PC-3 (cell line): ENCODE measurements at regions of chr11 and their contacts with region 1.

Region 1: GRCh38 chr11:77473801-77474683 is at the start of gene PAK1:
- DNase-seq: peak; percentile 69
- ATAC-seq: peak; percentile 73
- H3K4me3 ChIP-seq: peak within 1 kb of the TSS; percentile 69
- H3K27ac ChIP-seq: no peak within 1 kb of the TSS
- H3K4me1 ChIP-seq: peaks cover 20% of the 10 kb centered on the region
- H3K27me3 ChIP-seq: peaks cover 16% of the 10 kb centered on the region
- CTCF ChIP-seq: peak; percentile 29; the same call in 1 of the 2 replicates
- total RNA-seq, gene PAK1: 26.1 and 29.8 TPM in 2 replicates

Region 2: GRCh38 chr11:76721755-76722677 is 752.0 kb before region 1 on chr11:
- CTCF ChIA-PET with region 1: interaction called, 16 read pairs
- POLR2A ChIA-PET with region 1: no interaction called
- intact Hi-C with region 1: no loop called
- DNase-seq: peak; percentile 94
- ATAC-seq: peak; percentile 99
- H3K4me3 ChIP-seq: peak overlapping the region; percentile 50; the same call in 1 of the 2 replicates
- H3K27ac ChIP-seq: no peak overlapping the region
- H3K4me1 ChIP-seq: peaks cover 6% of the 10 kb centered on the region; the same call in 1 of the 2 replicates
- H3K27me3 ChIP-seq: peaks cover 22% of the 10 kb centered on the region; the same call in 1 of the 2 replicates
- CTCF ChIP-seq: peak; percentile 96

Region 3: DNA sequence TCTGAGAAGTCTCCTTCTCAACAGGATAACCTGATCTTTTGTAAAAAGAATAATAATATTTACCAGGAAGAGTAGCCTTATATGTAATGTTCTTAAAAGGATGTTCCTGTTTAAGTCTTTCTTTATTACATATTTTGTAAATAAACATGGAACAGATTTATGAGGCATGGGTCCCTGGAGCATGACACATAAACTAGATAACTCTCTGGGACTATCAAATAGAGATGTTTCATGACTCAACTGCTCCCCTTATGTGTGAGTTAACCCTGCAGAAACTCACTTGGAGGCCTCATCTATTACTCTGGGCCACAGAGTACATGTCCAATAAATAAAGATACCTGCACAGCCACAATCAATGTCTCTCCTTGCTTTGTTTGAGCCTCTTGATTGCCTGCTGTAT is 237.1 kb before region 1 on chr11:
- CTCF ChIA-PET with region 1: no interaction called
- POLR2A ChIA-PET with region 1: no interaction called
- intact Hi-C with region 1: no loop called
- DNase-seq: peak; percentile 35
- ATAC-seq: peak; percentile 65
- H3K4me3 ChIP-seq: no peak overlapping the region
- H3K27ac ChIP-seq: no peak overlapping the region
- H3K4me1 ChIP-seq: peaks cover 10% of the 10 kb centered on the region; the same call in 1 of the 2 replicates
- H3K27me3 ChIP-seq: no peaks in the 10 kb centered on the region
- CTCF ChIP-seq: no peak

Region 4: DNA sequence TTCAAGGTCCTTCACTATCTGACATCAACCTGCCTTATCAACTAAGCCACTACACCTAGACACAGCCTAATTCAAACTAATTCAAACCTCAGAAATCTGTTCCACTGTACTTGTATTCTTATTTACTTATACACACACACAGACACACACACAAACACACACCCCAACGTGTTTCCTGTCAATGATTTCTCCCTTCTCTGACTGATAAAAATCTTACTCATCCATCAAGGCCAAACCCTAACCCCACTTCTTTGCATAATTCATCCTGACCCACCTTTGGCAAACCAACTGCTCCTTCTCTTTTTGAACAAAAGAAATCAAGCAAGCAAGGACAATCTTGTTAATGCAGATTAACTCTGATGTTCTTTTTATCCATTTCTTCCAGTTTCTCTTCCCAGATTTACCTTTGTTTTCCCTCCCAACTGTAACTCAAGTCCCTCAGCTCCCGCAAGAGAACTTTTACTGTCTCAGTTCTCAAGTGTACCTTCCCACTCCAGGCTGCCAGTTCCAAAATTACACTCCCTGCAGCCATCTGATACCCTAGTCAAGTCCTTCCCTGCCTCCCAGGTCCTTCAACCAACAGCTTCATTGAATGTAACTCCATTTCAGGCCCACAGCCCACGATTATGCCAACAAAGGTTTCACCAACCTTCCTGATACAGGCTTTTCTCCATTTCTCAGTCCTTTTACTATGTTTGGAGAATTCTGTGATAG is 78.4 kb before region 1 on chr11:
- CTCF ChIA-PET with region 1: no interaction called
- POLR2A ChIA-PET with region 1: interaction called, 10 read pairs
- intact Hi-C with region 1: no loop called
- DNase-seq: peak; percentile 27
- ATAC-seq: peak; percentile 66
- H3K4me3 ChIP-seq: no peak overlapping the region
- H3K27ac ChIP-seq: no peak overlapping the region
- H3K4me1 ChIP-seq: peaks cover 12% of the 10 kb centered on the region
- H3K27me3 ChIP-seq: no peaks in the 10 kb centered on the region
- CTCF ChIP-seq: no peak

Region 5: GRCh38 chr11:77411717-77412441 is 62.2 kb before region 1 on chr11:
- CTCF ChIA-PET with region 1: no interaction called
- POLR2A ChIA-PET with region 1: interaction called, 4 read pairs
- intact Hi-C with region 1: loop called (anchors 5 kb)
- DNase-seq: peak; percentile 87
- ATAC-seq: peak; percentile 68
- H3K4me3 ChIP-seq: peak overlapping the region; percentile 63
- H3K27ac ChIP-seq: no peak overlapping the region
- H3K4me1 ChIP-seq: peaks cover 33% of the 10 kb centered on the region
- H3K27me3 ChIP-seq: no peaks in the 10 kb centered on the region
- CTCF ChIP-seq: no peak